Activated CD4-positive, alpha-beta memory T cell treated with anti-CD3 and anti-CD28 coated beads, Interleukin-2, amount 10 ng/mL, durations not matched to agents 7 days and 5 days (primary cell): ENCODE measurements at regions of chr6 and their contacts with region 1.

Region 1: DNA sequence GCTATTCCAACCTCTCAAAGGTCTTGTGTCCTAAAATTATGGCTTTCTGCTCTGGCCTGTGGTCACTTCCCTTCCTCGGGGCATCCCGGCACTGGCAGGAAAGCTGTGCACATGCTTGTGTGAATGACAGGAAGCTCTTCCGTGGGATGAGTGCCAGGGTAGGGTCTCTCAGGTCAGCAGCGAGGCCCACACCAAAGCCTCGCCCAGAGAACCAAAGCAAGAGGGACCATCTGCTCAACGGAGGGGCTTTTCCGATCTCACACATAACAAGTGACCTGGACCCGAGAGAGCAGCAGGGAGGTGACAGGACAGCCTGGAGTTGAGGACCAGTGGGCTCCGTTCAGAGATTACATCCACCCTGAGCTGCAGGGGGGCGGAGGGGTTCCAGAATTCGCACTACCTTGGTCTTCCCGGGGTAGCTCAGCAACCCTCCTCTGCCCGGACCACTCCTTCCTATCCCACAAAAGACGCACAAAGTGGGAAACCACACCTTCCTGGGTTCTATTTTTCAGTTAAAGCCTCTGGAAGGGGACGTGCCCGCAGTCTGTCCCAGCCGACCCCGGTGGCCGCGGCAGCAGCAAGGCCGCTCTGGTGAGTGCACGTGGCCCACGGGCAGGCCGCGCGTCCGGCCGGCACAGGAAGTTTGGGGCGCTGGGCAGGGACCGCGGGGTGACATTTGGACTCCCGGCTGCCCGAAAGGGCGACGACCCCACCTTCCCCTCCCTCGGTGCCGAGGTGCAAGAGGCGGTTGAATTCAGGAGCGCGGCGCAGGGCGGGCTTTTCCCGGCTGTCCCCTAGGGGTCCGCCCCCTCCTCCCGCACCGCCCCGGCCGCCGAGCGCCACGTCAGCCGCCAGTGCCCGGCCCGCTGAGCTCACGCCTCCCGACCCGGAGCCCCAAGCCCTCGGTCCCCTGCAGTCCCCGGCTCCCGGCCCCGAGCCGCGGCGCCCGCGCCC is 988 bp downstream of the TXNDC5 start:
- DNase-seq: peak; percentile 49
- H3K4me3 Mint-ChIP-seq: peak overlapping the region; percentile 71
- H3K27ac Mint-ChIP-seq: peak overlapping the region; percentile 38
- H3K4me1 Mint-ChIP-seq: peaks cover 21% of the 10 kb centered on the region
- H3K27me3 Mint-ChIP-seq: no peaks in the 10 kb centered on the region

Region 2: GRCh38 chr6:7725849-7726415 is 183.7 kb before region 1 on chr6 and contains the start of gene BMP6:
- CTCF ChIA-PET with region 1: interaction called, 13 read pairs
- POLR2A ChIA-PET with region 1: no interaction called
- DNase-seq: peak; percentile 71
- H3K4me3 Mint-ChIP-seq: peak within 1 kb of the TSS; percentile 67
- H3K27ac Mint-ChIP-seq: no peak within 1 kb of the TSS
- H3K4me1 Mint-ChIP-seq: peaks cover 18% of the 10 kb centered on the region
- H3K27me3 Mint-ChIP-seq: peaks cover 76% of the 10 kb centered on the region
- total RNA-seq, gene BMP6: not detected